ENCODE measurements at regions of chr10 and their contacts with region 1.

Region 1: GRCh38 chr10:95183271-95184230 is 10.5 kb upstream of the ACSM6 start:
- DNase-seq: peak; percentile 89 to 95 (median 95)
- ATAC-seq: peak; percentile 99
- H3K4me3 ChIP-seq: peak overlapping the region; percentile 62
- H3K27ac ChIP-seq: peak overlapping the region; percentile 38
- H3K4me1 ChIP-seq: no peaks in the 10 kb centered on the region
- H3K27me3 ChIP-seq: no peaks in the 10 kb centered on the region

Region 2: DNA sequence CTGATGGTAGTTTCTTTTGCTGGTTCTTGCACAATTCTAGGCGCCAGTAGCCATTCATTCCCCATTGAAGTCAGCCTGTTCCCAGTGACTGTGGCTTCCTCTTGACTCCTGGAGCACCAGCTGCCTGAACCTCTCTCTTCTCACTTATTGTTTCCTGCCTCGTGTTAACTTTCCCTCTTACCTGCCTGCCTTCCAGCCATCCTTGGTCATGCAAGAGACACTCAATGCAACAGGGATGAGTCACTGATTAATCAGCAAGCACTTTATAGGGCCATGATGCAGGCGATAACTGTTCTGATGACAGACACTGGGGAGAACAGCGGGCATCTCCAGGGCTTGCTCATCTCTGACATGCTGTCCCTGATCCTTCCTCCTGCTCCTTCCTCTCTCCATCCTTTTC is 1067.8 kb before region 1 on chr10:
- intact Hi-C with region 1: no loop called
- DNase-seq: no peak
- ATAC-seq: no peak
- H3K4me3 ChIP-seq: no peak overlapping the region
- H3K27ac ChIP-seq: no peak overlapping the region
- H3K4me1 ChIP-seq: peaks cover 7% of the 10 kb centered on the region
- H3K27me3 ChIP-seq: no peaks in the 10 kb centered on the region

Region 3: GRCh38 chr10:95246579-95247051 is 63.1 kb after region 1 on chr10:
- intact Hi-C with region 1: no loop called
- DNase-seq: peak; percentile 73 to 89 (median 79)
- ATAC-seq: peak; percentile 42 to 59
- H3K4me3 ChIP-seq: no peak overlapping the region
- H3K27ac ChIP-seq: peak overlapping the region; percentile 46
- H3K4me1 ChIP-seq: peaks cover 20% of the 10 kb centered on the region
- H3K27me3 ChIP-seq: no peaks in the 10 kb centered on the region

Region 4: GRCh38 chr10:95363303-95363912 is 179.9 kb after region 1 on chr10:
- intact Hi-C with region 1: loop called in 1 of 4 experiments (anchors 5 kb)
- DNase-seq: no peak
- ATAC-seq: peak in 1 of 2 donors; percentile 34
- H3K4me3 ChIP-seq: no peak overlapping the region
- H3K27ac ChIP-seq: no peak overlapping the region
- H3K4me1 ChIP-seq: peaks cover 7% of the 10 kb centered on the region
- H3K27me3 ChIP-seq: no peaks in the 10 kb centered on the region